Heart left ventricle (tissue), 16 donors: ENCODE measurements at regions of chr1 and their contacts with region 1.

Region 1: DNA sequence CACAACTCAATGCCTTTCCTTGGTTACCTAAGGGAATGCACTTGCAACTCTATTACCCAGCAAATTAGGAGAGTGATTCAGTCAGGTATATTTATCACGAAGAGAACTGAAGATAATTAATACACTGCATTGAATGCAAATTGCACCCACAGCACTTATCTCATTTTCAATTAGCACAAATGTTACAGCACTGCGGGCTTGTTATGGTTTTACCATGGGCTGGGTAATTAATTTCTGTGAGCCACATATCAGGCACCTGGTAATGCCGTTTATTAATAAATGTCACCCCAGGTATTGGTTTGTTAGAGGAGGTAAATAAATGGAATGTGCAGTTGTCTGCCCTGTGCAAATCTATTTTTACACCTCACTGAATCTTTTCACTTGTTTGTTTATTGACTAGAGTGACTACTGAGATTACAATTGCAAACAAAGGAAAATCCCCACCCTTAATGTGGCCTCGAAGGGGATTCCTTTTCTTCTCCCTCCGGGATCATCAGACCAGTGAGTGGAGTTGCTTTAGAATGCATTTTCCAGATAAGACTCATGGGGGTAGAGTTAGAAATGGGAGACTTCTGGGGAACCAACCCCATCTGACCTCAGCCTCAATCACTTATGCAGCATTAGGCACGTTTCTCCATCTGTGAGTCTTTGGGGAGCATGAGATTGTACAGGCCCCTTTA is 269.3 kb downstream of the RPS6KC1 start:
- DNase-seq: no peak
- ATAC-seq: no peak
- H3K4me3 ChIP-seq: no peak overlapping the region
- H3K27ac ChIP-seq: no peak overlapping the region
- H3K4me1 ChIP-seq: peaks cover 0 to under 1% (median 0%) of the 10 kb centered on the region in 12 donors
- H3K27me3 ChIP-seq: no peaks in the 10 kb centered on the region
- CTCF ChIP-seq: no peak
- POLR2A ChIP-seq: no peak

Region 2: GRCh38 chr1:213274140-213274539 is 46.2 kb before region 1 on chr1:
- intact Hi-C with region 1: loop called in 1 of 10 experiments (anchors 5 kb)
- DNase-seq: no peak
- ATAC-seq: no peak
- H3K4me3 ChIP-seq: no peak overlapping the region
- H3K27ac ChIP-seq: no peak overlapping the region
- H3K4me1 ChIP-seq: no peaks in the 10 kb centered on the region
- H3K27me3 ChIP-seq: no peaks in the 10 kb centered on the region
- CTCF ChIP-seq: no peak
- POLR2A ChIP-seq: no peak

Region 3: DNA sequence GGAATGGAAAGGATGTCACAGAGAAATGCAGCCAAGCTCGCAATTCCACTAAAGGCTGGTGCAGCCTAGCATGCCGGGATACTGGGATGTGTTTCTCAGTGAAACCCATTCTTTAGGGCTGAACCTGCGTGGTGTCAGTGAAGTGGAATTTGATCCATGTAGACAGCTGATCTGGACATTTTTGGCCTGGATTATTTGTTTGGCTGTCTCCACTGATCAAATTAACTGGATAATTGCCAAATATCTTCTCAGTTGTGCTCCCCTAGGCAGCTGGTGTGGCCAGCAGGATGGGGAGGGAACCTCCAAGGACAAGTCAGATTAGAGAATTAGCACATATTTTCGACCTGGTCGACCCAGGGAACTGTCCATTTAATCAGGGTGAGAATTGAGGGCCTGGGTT is 49.1 kb after region 1 on chr1:
- intact Hi-C with region 1: no loop called
- DNase-seq: no peak
- ATAC-seq: no peak
- H3K4me3 ChIP-seq: no peak overlapping the region
- H3K27ac ChIP-seq: no peak overlapping the region
- H3K4me1 ChIP-seq: no peaks in the 10 kb centered on the region
- H3K27me3 ChIP-seq: no peaks in the 10 kb centered on the region
- CTCF ChIP-seq: no peak
- POLR2A ChIP-seq: no peak